Endothelial cell of umbilical vein (primary cell): ENCODE measurements at regions of chr1 and their contacts with region 1.

Region 1: DNA sequence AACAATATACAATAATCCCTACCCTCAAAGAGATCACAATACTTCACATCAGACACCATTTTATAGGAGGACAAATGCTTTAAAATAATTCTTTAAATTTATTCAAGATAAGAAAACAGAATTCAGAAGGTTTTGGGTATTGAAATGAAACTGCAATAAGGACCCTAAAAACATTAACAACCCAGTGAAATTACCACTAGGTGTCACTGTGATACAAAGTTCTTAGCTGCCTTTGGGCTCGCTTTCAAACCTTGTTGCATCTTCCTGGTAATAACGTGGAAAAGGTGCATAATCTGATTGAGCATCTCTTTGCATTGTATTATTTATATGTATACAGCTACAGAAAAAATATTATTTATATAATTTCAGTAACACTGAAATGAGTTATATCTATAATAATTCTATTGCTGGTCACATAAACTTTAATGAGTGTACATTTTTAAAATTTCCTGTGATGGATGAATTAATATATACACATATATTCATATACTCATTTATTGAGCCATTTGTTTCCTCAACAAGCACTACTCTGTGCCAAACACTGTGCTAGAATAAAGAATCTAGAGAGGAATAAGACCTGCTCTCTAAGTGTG is 185.2 kb downstream of the FAF1 start:
- DNase-seq: peak; percentile 67
- H3K4me3 ChIP-seq: no peak overlapping the region
- H3K27ac ChIP-seq: no peak overlapping the region
- H3K4me1 ChIP-seq: no peaks in the 10 kb centered on the region
- H3K27me3 ChIP-seq: no peaks in the 10 kb centered on the region
- CTCF ChIP-seq: peak; percentile 38 to 50
- POLR2A ChIP-seq: no peak

Region 2: DNA sequence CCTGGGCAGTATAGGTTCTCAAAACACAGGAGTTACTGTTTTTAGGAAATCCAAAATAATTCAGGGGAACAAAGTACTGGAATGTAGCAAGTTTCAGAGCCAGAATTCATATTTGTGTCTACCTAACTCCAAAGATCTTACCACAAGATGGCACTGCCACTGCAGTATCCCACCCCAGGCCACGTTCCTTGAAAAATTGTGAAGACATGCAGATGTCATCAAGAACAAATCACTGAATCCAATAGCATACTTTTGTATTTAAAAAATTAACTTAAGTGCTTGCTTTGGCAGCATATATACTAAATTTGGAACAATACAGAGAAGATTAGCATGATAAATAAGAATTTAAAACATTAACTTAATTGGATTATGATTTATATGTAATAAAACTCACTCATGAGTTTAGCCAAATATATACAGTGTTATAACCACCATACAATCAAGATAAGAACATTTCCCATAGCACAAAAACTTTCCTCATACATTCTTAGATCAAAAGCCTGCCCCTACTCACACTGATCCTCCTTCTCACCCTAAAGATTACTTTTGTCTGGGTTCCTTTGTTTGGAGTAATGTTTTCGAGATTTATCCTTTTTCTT is 24.7 kb before region 1 on chr1:
- CTCF ChIA-PET with region 1: interaction called, 12 read pairs
- POLR2A ChIA-PET with region 1: no interaction called
- dilution Hi-C with region 1: no loop called
- intact Hi-C with region 1: no loop called
- DNase-seq: peak; percentile 61
- H3K4me3 ChIP-seq: no peak overlapping the region
- H3K27ac ChIP-seq: no peak overlapping the region
- H3K4me1 ChIP-seq: no peaks in the 10 kb centered on the region
- H3K27me3 ChIP-seq: no peaks in the 10 kb centered on the region
- CTCF ChIP-seq: peak; percentile 32 to 50
- POLR2A ChIP-seq: no peak

Region 3: DNA sequence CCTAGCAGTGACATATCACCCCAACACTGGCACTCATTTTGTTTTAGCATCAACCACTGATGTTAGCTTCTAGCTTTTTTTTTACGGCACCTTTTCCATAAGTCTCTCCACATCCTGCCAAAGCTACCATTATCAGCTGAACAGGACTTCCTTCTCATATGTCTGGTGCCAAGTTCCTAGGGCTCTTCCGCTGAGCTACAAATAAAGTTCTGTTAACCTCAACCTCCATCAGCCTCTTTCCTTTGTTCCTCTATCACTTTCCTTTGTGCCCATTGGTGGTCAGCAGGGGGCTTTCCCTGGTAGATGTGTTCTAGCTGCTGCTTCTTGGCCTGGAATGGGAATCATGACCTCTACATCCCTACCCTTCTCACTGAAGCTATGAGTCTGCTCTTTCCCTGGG is 21.4 kb after region 1 on chr1:
- CTCF ChIA-PET with region 1: interaction called, 12 read pairs
- POLR2A ChIA-PET with region 1: no interaction called
- dilution Hi-C with region 1: no loop called
- intact Hi-C with region 1: no loop called
- DNase-seq: peak; percentile 25
- H3K4me3 ChIP-seq: no peak overlapping the region
- H3K27ac ChIP-seq: no peak overlapping the region
- H3K4me1 ChIP-seq: no peaks in the 10 kb centered on the region
- H3K27me3 ChIP-seq: no peaks in the 10 kb centered on the region
- CTCF ChIP-seq: no peak
- POLR2A ChIP-seq: no peak

Region 4: GRCh38 chr1:50968158-50968820 is 193.4 kb after region 1 on chr1:
- CTCF ChIA-PET with region 1: interaction called, 23 read pairs
- POLR2A ChIA-PET with region 1: no interaction called
- dilution Hi-C with region 1: no loop called
- intact Hi-C with region 1: loop called (anchors 2 kb)
- DNase-seq: peak; percentile 94
- H3K4me3 ChIP-seq: peak overlapping the region; percentile 62 to 90 (median 73)
- H3K27ac ChIP-seq: peak overlapping the region; percentile 66
- H3K4me1 ChIP-seq: peaks cover 26% of the 10 kb centered on the region
- H3K27me3 ChIP-seq: no peaks in the 10 kb centered on the region
- CTCF ChIP-seq: peak; percentile 30 to 53
- POLR2A ChIP-seq: peak; percentile 47

Region 5: DNA sequence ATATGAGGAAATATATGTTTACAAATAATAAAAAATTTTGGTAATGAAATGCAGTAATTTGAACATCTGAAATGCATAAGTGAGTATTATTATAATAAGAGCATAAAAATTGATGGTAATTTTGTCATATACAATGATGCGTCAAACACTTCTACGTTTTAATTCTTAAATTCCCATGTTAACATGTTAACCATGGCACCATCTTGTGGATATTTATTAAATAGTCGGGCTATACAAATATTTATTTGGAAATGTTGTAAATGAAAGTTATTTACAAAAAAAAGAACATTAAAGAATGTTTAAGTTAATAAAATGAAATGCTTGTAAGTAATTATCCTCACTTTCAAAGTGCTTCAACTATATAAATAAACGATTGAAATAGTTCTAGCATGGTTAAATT is 270.0 kb after region 1 on chr1:
- CTCF ChIA-PET with region 1: interaction called, 13 read pairs
- POLR2A ChIA-PET with region 1: no interaction called
- dilution Hi-C with region 1: no loop called
- intact Hi-C with region 1: loop called (anchors 1 kb)
- DNase-seq: peak; percentile 19
- H3K4me3 ChIP-seq: no peak overlapping the region
- H3K27ac ChIP-seq: no peak overlapping the region
- H3K4me1 ChIP-seq: no peaks in the 10 kb centered on the region
- H3K27me3 ChIP-seq: peaks cover 2 to 3% of the 10 kb centered on the region in 2 experiments
- CTCF ChIP-seq: no peak
- POLR2A ChIP-seq: no peak

Region 6: DNA sequence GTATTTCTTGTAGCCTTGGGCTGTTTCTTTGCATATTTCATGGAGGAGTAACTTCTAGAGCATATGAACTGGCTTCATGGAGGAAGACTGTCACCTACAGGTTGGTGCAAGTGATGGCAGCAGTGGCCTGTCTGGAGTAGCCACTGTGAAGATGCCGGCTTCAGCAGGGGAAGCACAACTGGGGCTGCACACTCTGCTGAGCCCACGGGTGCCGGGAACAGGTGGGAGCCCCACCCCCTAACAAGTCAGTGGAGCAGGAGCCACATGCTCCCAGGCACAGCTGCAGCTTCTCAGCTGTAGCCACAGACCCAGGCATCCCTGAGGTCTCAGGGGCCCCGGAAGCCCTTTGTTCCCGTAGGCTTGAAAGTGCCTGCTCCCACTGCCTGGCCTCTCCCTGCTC is 284.0 kb after region 1 on chr1:
- CTCF ChIA-PET with region 1: interaction called, 11 read pairs
- POLR2A ChIA-PET with region 1: no interaction called
- dilution Hi-C with region 1: no loop called
- intact Hi-C with region 1: no loop called
- DNase-seq: peak; percentile 9
- H3K4me3 ChIP-seq: no peak overlapping the region
- H3K27ac ChIP-seq: no peak overlapping the region
- H3K4me1 ChIP-seq: peaks cover 17% of the 10 kb centered on the region
- H3K27me3 ChIP-seq: peaks cover 0 to 2% of the 10 kb centered on the region in 2 experiments
- CTCF ChIP-seq: peak; percentile 21 to 55
- POLR2A ChIP-seq: no peak

Region 7: GRCh38 chr1:51139474-51139873 is 364.6 kb after region 1 on chr1:
- CTCF ChIA-PET with region 1: interaction called, 31 read pairs
- POLR2A ChIA-PET with region 1: no interaction called
- dilution Hi-C with region 1: no loop called
- intact Hi-C with region 1: no loop called
- DNase-seq: peak; percentile 10
- H3K4me3 ChIP-seq: no peak overlapping the region
- H3K27ac ChIP-seq: no peak overlapping the region
- H3K4me1 ChIP-seq: no peaks in the 10 kb centered on the region
- H3K27me3 ChIP-seq: peaks cover 7 to 9% of the 10 kb centered on the region in 2 experiments
- CTCF ChIP-seq: peak in 1 of 2 donors; percentile 2
- POLR2A ChIP-seq: no peak